Activated CD4-positive, alpha-beta T cell treated with anti-CD3 and anti-CD28 coated beads for 36 hours (primary cell): ENCODE measurements at regions of chr13 and their contacts with region 1.

Region 1: DNA sequence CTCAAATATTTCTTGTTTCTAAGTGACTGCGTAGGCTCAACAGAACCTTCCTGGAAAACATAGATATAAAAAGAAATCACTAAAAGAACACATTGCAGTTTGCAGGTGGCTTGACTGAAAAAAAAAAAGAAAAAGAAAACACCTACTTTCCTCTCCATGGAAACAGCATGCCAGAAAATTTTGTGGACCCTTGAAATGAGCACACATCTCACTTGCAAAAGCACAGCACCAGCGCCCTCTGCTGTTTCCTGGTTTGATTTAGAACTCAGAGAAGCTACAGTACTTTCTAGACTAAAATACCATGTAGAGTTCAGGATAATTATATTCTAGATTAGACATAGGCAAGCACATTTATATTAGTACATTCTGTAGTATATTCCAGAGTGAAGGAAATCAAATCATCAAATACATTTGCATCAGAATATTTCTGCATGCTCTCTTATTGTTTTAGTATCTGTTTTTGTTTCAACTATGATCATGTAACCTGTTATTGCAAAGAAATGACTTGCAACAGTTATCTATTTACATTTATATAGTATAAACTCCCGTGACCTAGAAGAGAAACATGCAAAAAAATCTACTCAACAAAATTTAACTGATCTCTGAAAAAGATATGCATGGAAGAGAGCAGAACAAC is 22.3 kb upstream of the XPO4 start:
- DNase-seq: peak; percentile 88
- ATAC-seq: peak; percentile 42
- H3K4me3 Mint-ChIP-seq: no peak overlapping the region
- H3K27ac Mint-ChIP-seq: no peak overlapping the region
- H3K4me1 Mint-ChIP-seq: no peaks in the 10 kb centered on the region
- H3K27me3 Mint-ChIP-seq: no peaks in the 10 kb centered on the region

Region 2: GRCh38 chr13:20182231-20182846 is 742.5 kb before region 1 on chr13:
- CTCF ChIA-PET with region 1: no interaction called
- POLR2A ChIA-PET with region 1: no interaction called
- intact Hi-C with region 1: loop called in 1 of 2 experiments (anchors 1 kb)
- DNase-seq: peak; percentile 64
- ATAC-seq: peak; percentile 98
- H3K4me3 Mint-ChIP-seq: no peak overlapping the region
- H3K27ac Mint-ChIP-seq: no peak overlapping the region
- H3K4me1 Mint-ChIP-seq: peaks cover 3% of the 10 kb centered on the region
- H3K27me3 Mint-ChIP-seq: peaks cover 31% of the 10 kb centered on the region

Region 3: GRCh38 chr13:20713751-20714150 is 211.1 kb before region 1 on chr13:
- CTCF ChIA-PET with region 1: interaction called, 4 read pairs
- POLR2A ChIA-PET with region 1: interaction called, 4 read pairs
- intact Hi-C with region 1: loop called (anchors 1 kb)
- DNase-seq: peak; percentile 30
- ATAC-seq: no peak
- H3K4me3 Mint-ChIP-seq: no peak overlapping the region
- H3K27ac Mint-ChIP-seq: no peak overlapping the region
- H3K4me1 Mint-ChIP-seq: peaks cover 12% of the 10 kb centered on the region
- H3K27me3 Mint-ChIP-seq: peaks cover 11% of the 10 kb centered on the region